GM10248 (cell line): ENCODE measurements at regions of chr1 and their contacts with region 1.

Region 1: DNA sequence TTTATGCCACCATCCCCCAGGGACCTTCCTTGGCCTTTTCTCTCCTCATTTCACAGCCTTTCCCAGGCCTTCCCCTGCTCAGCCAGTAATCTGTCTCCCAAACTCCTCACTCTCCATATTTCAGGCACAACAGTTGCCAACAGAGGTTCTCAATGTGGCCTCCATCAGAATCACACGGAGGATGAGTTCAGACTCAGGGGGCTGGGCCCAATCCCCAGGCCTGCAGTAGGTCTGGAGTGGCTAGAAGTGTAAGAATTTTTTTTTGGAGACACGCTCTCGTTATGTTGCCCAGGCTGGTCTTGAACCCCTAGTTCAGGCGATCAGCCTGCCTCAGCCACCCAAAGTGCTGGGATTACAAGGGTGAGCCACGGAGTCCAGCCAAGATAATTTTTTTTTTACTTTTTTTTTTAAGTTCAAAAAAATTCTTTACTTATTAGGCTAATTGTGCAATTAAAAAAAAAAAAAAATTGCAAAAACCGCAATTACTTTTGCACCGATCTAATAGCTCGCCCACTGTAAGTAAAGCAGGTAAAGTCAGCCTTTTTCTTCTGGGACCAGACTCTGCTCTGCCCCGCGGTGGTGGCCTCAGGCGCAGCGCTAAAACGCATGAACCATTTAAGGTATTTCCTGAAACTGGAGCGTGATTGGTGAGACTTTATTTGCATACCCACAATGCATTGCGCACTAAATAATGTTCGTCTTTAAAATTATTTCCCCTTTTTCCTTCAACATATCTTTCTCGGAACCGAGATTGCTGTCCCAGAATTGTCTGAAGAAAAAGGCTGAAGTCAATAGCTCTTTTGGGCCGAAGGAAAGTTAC is 18.7 kb downstream of the KIAA2013 start:
- DNase-seq: peak; percentile 90
- CTCF ChIP-seq: peak; percentile 93

Region 2: GRCh38 chr1:11838349-11839272 is 68.9 kb before region 1 on chr1:
- CTCF ChIA-PET with region 1: interaction called, 8 read pairs
- POLR2A ChIA-PET with region 1: interaction called, 13 read pairs
- DNase-seq: peak; percentile 90
- CTCF ChIP-seq: peak; percentile 99

Region 3: DNA sequence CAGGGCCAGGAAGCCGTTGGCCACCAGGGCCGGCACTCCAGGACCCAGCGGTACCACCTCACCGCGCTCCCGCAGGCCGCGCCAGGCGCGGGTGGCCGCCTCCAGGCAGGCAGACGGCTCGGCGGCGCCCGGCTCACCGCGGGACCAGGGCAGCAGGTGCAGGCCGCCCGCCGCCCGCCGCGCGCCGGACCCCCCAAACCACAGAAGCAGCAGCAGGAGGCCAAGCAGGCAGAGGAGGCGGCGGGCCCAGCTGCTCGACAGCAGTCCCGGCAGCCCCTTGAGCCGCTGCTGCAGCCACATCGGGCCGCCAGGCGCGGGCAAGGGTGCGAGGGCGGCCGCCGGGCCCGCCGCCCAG is 18.4 kb after region 1 on chr1:
- CTCF ChIA-PET with region 1: interaction called, 4 read pairs
- POLR2A ChIA-PET with region 1: interaction called, 53 read pairs
- DNase-seq: no peak
- CTCF ChIP-seq: no peak

Region 4: GRCh38 chr1:11967028-11967547 is 59.6 kb after region 1 on chr1:
- CTCF ChIA-PET with region 1: interaction called, 9 read pairs
- POLR2A ChIA-PET with region 1: interaction called, 33 read pairs
- DNase-seq: peak; percentile 75
- CTCF ChIP-seq: peak; percentile 75

Region 5: DNA sequence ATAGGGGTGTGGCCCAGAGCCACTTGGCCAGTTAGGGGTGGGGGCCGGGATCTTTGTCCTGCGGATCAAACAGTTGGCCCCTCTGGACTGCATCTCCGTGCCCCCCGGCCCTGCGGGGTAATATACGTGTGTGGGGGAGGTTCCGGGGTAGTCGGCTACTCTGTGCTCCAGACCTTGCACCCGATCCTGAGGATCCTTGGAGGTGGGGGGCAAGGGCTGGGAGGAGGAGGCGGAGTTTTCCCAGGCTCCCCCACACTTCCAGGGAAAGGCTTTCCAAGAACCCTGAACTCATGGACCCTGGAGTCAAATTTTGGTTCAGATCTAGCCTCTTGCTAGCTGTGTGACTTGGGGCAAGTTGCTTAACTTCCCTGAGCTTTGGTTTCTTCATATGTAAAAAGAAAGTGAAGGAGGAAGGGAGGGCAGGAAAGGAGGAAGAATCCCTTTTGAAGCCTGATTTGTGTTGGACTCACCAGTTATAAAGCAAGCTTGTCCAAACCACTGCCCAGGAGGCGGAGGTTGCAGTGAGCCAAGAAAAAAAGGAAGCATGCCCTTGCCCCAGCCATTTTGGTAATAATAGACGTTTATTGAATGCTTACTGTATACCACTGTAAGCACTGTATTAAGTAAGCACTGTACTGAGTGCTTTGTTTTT is 112.5 kb after region 1 on chr1:
- CTCF ChIA-PET with region 1: no interaction called
- POLR2A ChIA-PET with region 1: interaction called, 11 read pairs
- DNase-seq: no peak
- CTCF ChIP-seq: no peak

Region 6: GRCh38 chr1:12040457-12041051 is 133.1 kb after region 1 on chr1:
- CTCF ChIA-PET with region 1: no interaction called
- POLR2A ChIA-PET with region 1: interaction called, 25 read pairs
- DNase-seq: peak; percentile 62
- CTCF ChIP-seq: no peak

Region 7: DNA sequence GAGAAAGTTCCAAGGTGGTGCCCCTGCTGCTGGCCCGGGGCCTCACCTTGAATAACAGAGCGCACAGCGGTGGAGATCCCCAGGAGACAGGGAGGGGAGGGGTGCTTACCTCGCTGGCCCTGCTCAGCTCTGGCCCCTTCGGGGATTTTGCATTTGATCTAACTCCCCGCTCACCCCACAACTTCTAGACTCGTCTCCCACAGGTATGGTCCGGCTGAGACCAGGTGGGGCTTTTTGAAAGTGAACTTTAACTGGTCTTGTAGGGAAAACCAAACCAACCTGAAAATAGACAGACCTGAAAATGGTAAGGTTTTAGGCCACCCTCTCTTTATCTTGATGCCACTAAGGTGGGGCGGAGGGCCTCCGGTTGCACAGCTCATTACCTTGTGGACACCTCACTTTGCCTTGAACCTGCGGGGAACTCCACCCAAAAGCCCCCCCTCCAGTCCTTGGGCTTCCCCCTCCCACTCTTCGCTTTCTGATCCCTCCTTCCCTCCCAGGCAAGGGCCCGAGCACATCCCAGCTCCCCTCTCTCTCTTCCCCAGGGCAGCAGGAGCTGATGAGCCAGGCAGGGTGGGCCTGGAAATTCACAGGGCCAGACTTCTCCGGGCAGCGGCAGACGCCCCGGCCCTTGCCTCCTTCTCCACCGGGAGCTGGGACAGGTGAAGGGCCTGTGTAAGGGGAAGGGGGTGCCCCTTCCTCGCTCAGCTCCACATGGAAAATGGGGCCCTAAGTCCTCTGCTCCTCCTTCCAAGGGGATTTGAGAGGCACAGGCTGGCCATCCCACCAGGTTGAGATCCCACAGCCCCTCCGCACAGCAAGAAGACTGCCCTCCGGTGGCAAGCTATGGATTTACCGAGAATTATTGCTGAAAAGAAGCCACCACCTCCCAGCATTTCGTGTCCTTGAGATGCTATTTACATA is 171.7 kb after region 1 on chr1:
- CTCF ChIA-PET with region 1: interaction called, 3 read pairs
- POLR2A ChIA-PET with region 1: interaction called, 10 read pairs
- DNase-seq: peak; percentile 80
- CTCF ChIP-seq: peak; percentile 59

Region 8: GRCh38 chr1:12196641-12197482 is 289.4 kb after region 1 on chr1:
- CTCF ChIA-PET with region 1: no interaction called
- POLR2A ChIA-PET with region 1: no interaction called
- DNase-seq: no peak
- CTCF ChIP-seq: peak; percentile 10